Lower leg skin (tissue), 4 donors: ENCODE measurements at regions of chr2 and their contacts with region 1.

Region 1: GRCh38 chr2:16773080-16773713 is 107.6 kb upstream of the CYRIA start:
- DNase-seq: no peak
- H3K4me3 ChIP-seq: no peak overlapping the region
- CTCF ChIP-seq: no peak
- POLR2A ChIP-seq: no peak

Region 2: GRCh38 chr2:17667898-17668297 is 894.7 kb after region 1 on chr2:
- intact Hi-C with region 1: loop called (anchors 10 kb)
- DNase-seq: no peak
- H3K4me3 ChIP-seq: no peak overlapping the region
- CTCF ChIP-seq: no peak
- POLR2A ChIP-seq: no peak